BJ (cell line): ENCODE measurements at regions of chr14 and their contacts with region 1.

Region 1: DNA sequence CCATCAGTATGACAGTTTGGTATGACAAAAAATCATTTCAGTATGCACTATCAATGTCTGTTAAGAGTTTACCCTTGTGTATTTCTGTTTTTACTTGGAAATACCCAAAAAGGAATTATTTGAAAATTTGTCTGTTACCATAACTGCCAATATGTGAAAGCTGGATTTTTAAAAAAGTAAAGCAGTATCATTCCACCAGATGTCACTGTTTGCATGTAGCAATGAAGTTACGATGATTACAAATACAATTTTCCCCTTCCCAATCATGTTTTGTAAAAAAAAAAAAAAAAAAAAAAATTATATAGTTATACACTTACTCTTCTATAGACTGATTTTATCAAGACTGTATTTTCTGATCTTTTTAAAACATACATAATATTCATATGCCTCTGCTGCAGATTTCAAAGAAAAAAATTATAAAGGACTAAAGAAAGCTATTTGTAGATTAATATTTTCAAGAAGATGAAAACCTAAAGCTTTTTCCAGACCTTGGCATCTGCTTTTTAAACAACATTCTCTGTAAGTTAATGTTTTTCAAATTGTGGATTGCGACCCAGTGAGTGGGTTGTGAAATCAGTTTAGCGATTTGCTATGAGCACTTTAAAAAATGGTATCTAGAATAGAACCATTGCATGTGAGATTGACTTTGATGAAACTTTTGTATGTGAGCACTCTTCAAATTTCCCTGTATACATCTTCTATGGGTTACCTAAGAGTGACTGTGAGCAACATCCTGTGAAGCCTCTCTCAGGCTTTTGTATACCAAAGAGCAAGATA is 114.2 kb downstream of the TTC6 start:
- DNase-seq: no peak
- H3K4me3 ChIP-seq: no peak overlapping the region
- H3K27me3 ChIP-seq: no peaks in the 10 kb centered on the region
- CTCF ChIP-seq: peak; percentile 44

Region 2: GRCh38 chr14:37615582-37616289 is 93.9 kb before region 1 on chr14:
- CTCF ChIA-PET with region 1: no interaction called
- POLR2A ChIA-PET with region 1: no interaction called
- DNase-seq: no peak
- H3K4me3 ChIP-seq: no peak overlapping the region
- H3K27me3 ChIP-seq: peaks cover 12% of the 10 kb centered on the region
- CTCF ChIP-seq: no peak

Region 3: GRCh38 chr14:37625597-37626595 is 83.7 kb before region 1 on chr14:
- CTCF ChIA-PET with region 1: no interaction called
- POLR2A ChIA-PET with region 1: interaction called, 10 read pairs
- DNase-seq: no peak
- H3K4me3 ChIP-seq: no peak overlapping the region
- H3K27me3 ChIP-seq: 0 out of 2 replicates have a peak, but pooled peaks cover 2% of the 10 kb centered on the region
- CTCF ChIP-seq: no peak

Region 4: GRCh38 chr14:37637341-37637740 is 72.3 kb before region 1 on chr14:
- CTCF ChIA-PET with region 1: no interaction called
- POLR2A ChIA-PET with region 1: no interaction called
- DNase-seq: no peak
- H3K4me3 ChIP-seq: no peak overlapping the region
- H3K27me3 ChIP-seq: no peaks in the 10 kb centered on the region; the same call in 1 of the 2 replicates
- CTCF ChIP-seq: no peak

Region 5: GRCh38 chr14:37791384-37792036 is 81.9 kb after region 1 on chr14:
- CTCF ChIA-PET with region 1: no interaction called
- POLR2A ChIA-PET with region 1: no interaction called
- DNase-seq: no peak
- H3K4me3 ChIP-seq: no peak overlapping the region
- H3K27me3 ChIP-seq: no peaks in the 10 kb centered on the region
- CTCF ChIP-seq: no peak